Adrenal gland (tissue), 19 donors: ENCODE measurements at regions of chr4 and their contacts with region 1.

Region 1: DNA sequence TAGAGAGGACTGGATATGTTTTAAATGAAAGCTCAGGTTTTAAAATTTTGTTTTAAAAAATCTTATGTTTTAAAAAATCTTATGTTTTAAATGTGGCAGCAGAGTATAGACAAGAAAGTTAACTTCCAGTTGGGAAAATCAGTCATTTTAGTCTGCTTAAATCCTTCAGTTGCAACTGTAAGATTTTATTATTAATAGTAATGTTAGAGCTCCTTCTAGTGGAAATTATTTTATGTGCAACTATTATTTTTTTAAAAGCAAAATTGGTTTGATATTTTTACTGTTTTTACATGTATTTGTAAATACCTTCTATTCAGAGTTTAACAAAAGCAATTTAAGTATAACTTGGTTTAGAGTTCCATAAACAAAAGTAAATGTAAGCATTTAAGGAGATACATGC is 8.5 kb upstream of the NUDT6 start:
- DNase-seq: no peak
- H3K4me3 ChIP-seq: no peak overlapping the region
- H3K27ac ChIP-seq: no peak overlapping the region
- H3K4me1 ChIP-seq: no peaks in the 10 kb centered on the region
- H3K27me3 ChIP-seq: no peaks in the 10 kb centered on the region
- CTCF ChIP-seq: peak; percentile 23 to 71 (median 50)
- POLR2A ChIP-seq: no peak

Region 2: GRCh38 chr4:122379239-122379638 is 551.6 kb before region 1 on chr4:
- intact Hi-C with region 1: no loop called
- DNase-seq: no peak
- H3K4me3 ChIP-seq: no peak overlapping the region
- H3K27ac ChIP-seq: no peak overlapping the region
- H3K4me1 ChIP-seq: no peaks in the 10 kb centered on the region
- H3K27me3 ChIP-seq: no peaks in the 10 kb centered on the region
- CTCF ChIP-seq: no peak
- POLR2A ChIP-seq: no peak

Region 3: GRCh38 chr4:122591196-122591595 is 339.7 kb before region 1 on chr4:
- intact Hi-C with region 1: loop called in 1 of 2 experiments (anchors 10 kb)
- DNase-seq: no peak
- H3K4me3 ChIP-seq: no peak overlapping the region
- H3K27ac ChIP-seq: no peak overlapping the region
- H3K4me1 ChIP-seq: no peaks in the 10 kb centered on the region
- H3K27me3 ChIP-seq: no peaks in the 10 kb centered on the region
- CTCF ChIP-seq: no peak
- POLR2A ChIP-seq: no peak